Heart left ventricle (tissue), 16 donors: ENCODE measurements at regions of chr11 and their contacts with region 1.

Region 1: DNA sequence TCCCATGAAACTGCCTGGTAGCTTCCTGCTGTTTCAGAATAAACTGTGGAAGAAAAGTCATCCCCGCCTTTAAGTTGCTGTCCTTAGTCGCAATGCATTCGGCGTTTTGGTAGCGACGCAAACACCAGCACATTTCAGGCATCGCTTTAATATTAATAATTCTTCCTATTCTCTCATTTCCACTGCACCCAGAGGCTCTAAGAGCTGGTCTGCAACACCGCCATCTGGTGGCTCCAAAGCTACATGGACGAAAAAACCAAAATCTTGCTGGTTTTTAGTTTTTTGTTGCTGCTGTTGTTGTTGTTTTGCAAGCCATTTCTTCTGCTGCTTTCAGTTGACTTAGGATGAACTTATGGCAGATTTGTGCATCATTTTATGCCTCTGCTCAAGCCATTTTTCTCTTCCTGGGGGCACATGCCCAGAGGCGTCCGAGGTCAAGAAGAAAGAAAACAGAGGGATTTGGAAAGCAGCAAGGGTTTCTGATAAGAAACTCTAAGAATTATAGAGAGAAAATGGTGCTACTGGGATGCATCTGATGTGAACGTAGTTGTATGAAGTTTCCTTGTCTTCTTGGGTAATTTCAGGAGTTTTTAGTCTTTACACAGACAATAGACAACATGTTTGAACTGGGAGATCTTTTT is 345.4 kb upstream of the KIRREL3 start:
- DNase-seq: peak in 3 of 5 donors; percentile 7 to 32 (median 19)
- ATAC-seq: no peak
- H3K4me3 ChIP-seq: peak overlapping the region in 1 of 12 donors; percentile 1
- H3K27ac ChIP-seq: no peak overlapping the region
- H3K4me1 ChIP-seq: no peaks in the 10 kb centered on the region
- H3K27me3 ChIP-seq: peaks cover 0 to 4% (median 0%) of the 10 kb centered on the region in 9 donors
- CTCF ChIP-seq: peak; percentile 55 to 82 (median 74)
- POLR2A ChIP-seq: no peak

Region 2: GRCh38 chr11:126303623-126304456 is 1042.1 kb before region 1 on chr11 and contains the start of gene DCPS:
- intact Hi-C with region 1: loop called in 1 of 10 experiments (anchors 10 kb)
- DNase-seq: peak; percentile 90 to 94 (median 93)
- ATAC-seq: peak; percentile 96 to 100 (median 99)
- H3K4me3 ChIP-seq: peak within 1 kb of the TSS; percentile 52 to 80 (median 69)
- H3K27ac ChIP-seq: peak within 1 kb of the TSS; percentile 52 to 95 (median 88)
- H3K4me1 ChIP-seq: peaks cover 0 to 26% (median 12%) of the 10 kb centered on the region in 12 donors
- H3K27me3 ChIP-seq: no peaks in the 10 kb centered on the region
- CTCF ChIP-seq: no peak
- POLR2A ChIP-seq: peak in 1 of 2 donors; percentile 68
- total RNA-seq, gene DCPS: 7.7 to 15.5 (median 11.1) TPM

Region 3: GRCh38 chr11:126607374-126607773 is 738.6 kb before region 1 on chr11:
- intact Hi-C with region 1: loop called in 6 of 10 experiments (anchors 5 to 10 kb)
- DNase-seq: peak in 4 of 5 donors; percentile 24 to 46 (median 32)
- ATAC-seq: peak in 3 of 4 donors; percentile 75 to 83 (median 80)
- H3K4me3 ChIP-seq: no peak overlapping the region
- H3K27ac ChIP-seq: no peak overlapping the region
- H3K4me1 ChIP-seq: peaks cover 0 to 2% (median 0%) of the 10 kb centered on the region in 12 donors
- H3K27me3 ChIP-seq: peaks cover 0 to 58% (median 12%) of the 10 kb centered on the region in 9 donors
- CTCF ChIP-seq: peak; percentile 35 to 68 (median 58)
- POLR2A ChIP-seq: no peak

Region 4: DNA sequence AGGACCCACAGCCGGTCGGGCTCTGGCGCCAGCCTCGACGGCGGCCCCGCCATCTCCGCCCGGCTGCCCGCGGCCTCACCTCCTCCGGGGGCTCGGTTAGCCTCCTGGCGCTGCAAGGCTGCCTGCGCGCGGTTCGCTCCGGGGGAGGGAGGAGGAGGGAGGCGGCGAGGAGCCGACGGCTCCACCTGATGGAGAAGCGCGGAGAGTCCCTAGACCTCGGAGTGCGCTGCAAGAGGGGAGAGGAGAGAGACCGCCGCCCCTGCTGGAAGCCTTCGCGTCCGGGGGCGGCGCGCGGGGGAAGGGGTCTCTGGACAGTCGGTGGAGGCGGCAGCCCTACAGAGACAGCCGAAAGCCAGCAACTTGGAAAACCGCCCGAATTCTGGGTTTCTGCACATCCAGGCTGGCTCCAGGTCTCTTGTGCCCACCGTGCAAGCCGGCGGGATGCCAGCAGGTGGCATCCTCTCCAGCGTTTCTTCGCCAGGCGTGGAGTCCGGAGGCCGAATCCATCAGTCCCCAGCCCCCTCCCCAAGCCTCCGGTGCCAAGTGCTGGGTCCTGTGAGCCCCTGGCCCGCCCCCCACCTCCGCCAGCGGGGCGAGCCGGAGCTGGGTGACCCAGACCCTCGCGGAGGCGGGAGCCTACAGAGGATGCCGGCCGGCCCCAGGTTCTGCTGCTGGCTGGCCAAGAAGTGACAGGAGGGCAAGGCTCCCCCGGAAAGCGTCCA is 342.5 kb before region 1 on chr11:
- intact Hi-C with region 1: loop called in 3 of 10 experiments (anchors 5 to 10 kb)
- DNase-seq: no peak
- ATAC-seq: peak in 3 of 4 donors; percentile 22 to 61 (median 56)
- H3K4me3 ChIP-seq: peak overlapping the region in 10 of 12 donors; percentile 5 to 33 (median 18)
- H3K27ac ChIP-seq: no peak overlapping the region
- H3K4me1 ChIP-seq: peaks cover 0 to 21% (median 2%) of the 10 kb centered on the region in 12 donors
- H3K27me3 ChIP-seq: peaks cover 32 to 99% (median 64%) of the 10 kb centered on the region in 9 donors
- CTCF ChIP-seq: peak in 3 of 12 donors; percentile 9 to 27 (median 12)
- POLR2A ChIP-seq: no peak

Region 5: DNA sequence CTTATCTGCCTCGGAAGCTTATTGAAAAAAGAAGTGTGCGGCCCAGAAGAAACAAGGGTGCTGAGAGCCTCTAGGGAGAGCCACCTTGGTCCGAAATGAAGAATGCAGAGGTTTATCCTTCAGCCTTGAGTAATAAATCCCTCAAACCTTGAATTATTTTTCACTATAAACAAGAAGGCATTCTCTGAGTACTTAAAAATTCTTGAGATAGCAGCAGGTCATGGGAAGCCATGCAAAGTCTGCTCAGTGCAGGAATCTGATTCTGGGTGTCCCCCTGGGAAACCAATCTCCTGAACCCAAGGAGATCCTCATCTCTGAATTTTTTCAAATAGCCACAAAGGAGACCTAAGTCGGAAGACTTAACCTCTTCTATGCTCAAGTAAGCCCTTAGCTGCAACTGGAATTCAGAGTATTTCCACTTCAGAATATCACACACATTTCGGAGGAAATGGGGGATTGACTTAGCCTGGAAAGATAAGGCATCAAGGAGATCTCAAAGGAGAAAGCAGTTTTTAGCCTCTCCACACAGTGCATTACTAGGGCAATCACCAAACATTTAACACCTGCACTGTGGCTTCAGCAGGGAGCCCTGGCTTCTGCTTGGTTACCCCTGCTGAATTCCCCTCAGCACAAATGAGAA is 876.4 kb after region 1 on chr11:
- intact Hi-C with region 1: no loop called
- DNase-seq: no peak
- ATAC-seq: no peak
- H3K4me3 ChIP-seq: no peak overlapping the region
- H3K27ac ChIP-seq: no peak overlapping the region
- H3K4me1 ChIP-seq: no peaks in the 10 kb centered on the region
- H3K27me3 ChIP-seq: no peaks in the 10 kb centered on the region
- CTCF ChIP-seq: no peak
- POLR2A ChIP-seq: no peak